ENCODE measurements at regions of chr16 and their contacts with region 1.

Region 1: DNA sequence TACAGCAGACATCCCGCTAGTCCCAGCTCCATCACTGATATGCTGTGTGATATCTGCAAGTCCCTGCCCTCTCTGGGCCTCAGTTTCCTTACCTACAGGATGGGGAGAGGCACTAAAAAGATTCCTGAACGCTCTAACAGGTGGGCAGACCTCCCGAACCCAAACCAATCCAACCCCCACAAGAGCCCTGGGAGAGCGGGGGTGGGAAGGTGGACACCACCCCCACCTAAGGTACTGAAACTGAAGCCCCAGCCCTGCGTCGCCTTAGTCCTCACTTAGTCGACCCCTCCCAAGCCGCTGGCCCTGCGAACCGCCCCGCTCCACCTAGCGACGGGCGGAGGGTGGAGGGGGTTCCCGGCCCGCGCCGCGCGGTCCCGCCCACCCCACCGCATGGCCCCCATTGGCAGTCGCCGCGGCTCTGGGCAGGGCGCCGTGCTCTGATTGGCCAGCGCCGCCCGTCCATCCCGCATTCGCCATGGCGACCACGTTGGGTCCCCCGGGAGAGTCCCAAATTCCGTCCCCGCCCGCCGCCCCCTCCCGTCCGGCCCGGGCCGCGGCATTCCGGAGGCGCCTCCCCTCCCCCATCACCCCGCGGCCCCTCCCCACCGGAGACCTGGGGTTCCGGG is 578 bp downstream of the CCDC102A start:
- DNase-seq: peak; percentile 87
- ATAC-seq: peak; percentile 70
- H3K4me3 Mint-ChIP-seq: peak overlapping the region; percentile 85
- H3K27ac Mint-ChIP-seq: peak overlapping the region; percentile 89
- H3K4me1 Mint-ChIP-seq: peaks cover 83% of the 10 kb centered on the region
- H3K27me3 Mint-ChIP-seq: no peaks in the 10 kb centered on the region
- CTCF ChIP-seq: no peak

Region 2: GRCh38 chr16:56425439-56425832 is 1110.4 kb before region 1 on chr16 and contains the start of gene AMFR:
- CTCF ChIA-PET with region 1: no interaction called
- POLR2A ChIA-PET with region 1: no interaction called
- intact Hi-C with region 1: loop called (anchors 2 kb)
- DNase-seq: peak; percentile 82
- ATAC-seq: peak; percentile 87
- H3K4me3 Mint-ChIP-seq: peak within 1 kb of the TSS; percentile 96
- H3K27ac Mint-ChIP-seq: peak within 1 kb of the TSS; percentile 95
- H3K4me1 Mint-ChIP-seq: peaks cover 44% of the 10 kb centered on the region
- H3K27me3 Mint-ChIP-seq: no peaks in the 10 kb centered on the region
- CTCF ChIP-seq: no peak
- total RNA-seq, gene AMFR: 118 and 134 TPM in 2 replicates

Region 3: DNA sequence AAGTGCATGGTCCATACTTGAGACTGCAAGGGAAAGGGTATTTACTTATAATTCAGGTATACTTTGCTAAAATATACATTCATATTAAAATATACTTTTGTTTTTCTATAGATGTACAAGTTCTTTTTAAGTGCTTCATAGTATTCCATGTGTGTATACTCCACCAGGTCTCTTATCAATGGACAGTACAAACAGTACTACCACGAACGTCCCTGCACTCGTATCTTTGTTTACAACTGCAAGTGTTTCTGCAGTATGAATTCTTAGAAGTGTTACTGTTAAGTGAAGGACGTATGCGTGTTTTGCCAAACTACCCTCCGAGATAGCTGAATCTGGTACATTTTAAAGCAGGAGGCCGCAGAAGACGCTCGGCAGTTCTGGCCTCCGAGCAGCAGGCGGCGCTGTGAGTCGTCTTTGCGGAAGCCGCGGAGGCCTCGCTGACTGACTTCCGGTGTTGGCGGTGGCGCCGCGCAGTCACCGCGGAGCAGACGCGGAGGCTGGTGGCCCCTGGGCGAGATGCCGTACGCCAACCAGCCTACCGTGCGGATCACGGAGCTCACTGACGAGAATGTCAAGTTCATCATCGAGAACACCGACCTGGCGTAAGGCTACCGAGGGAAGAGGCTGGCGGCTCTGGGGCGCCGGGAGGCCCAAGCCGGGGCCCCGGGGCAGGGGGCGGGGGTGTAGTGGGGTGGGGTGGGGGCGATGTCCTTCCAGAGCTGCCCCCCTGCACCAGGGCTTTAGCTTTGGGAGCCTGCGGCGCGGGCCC is 73.4 kb before region 1 on chr16 and contains the start of gene POLR2C:
- CTCF ChIA-PET with region 1: interaction called, 4 read pairs
- POLR2A ChIA-PET with region 1: no interaction called
- intact Hi-C with region 1: loop called (anchors 2 kb)
- DNase-seq: peak; percentile 93
- ATAC-seq: peak; percentile 97
- H3K4me3 Mint-ChIP-seq: peak within 1 kb of the TSS; percentile 100
- H3K27ac Mint-ChIP-seq: peak within 1 kb of the TSS; percentile 99
- H3K4me1 Mint-ChIP-seq: peaks cover 29% of the 10 kb centered on the region
- H3K27me3 Mint-ChIP-seq: no peaks in the 10 kb centered on the region
- CTCF ChIP-seq: peak; percentile 38
- total RNA-seq, gene POLR2C: 52.2 and 56.6 TPM in 2 replicates

Region 4: DNA sequence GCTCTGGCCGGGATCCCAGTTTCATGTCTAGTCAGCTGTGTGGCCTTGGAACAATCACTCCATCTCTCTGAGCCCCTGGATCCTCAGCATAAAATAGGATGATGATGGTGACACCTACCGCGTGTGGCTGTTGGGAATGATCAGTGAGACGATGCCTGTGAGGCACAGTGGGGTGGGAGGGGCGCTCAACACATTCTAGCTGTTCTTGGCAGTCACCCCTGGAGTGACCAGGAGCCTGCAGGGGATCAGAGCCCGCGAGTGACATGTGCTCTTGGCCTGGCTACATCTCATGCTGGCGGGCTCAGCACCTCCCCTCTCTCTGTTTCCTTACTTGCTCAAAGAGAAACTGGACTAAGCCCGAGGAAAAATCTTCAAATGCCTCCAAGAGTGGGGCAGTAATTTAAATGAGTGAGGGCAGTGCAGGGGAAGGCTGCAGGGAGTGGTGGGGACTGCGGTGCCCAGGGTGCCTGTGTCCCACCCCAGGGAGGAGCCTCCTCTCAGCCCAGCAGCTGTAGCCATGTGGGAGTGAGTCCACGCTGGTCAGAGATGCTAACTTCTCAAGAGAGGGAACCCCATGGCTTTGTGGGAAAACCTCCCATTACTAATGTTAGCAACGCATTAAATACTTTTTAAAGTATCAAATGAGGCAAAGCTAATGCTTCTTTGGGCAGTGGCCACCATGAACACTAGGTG is 26.4 kb before region 1 on chr16:
- CTCF ChIA-PET with region 1: no interaction called
- POLR2A ChIA-PET with region 1: no interaction called
- intact Hi-C with region 1: no loop called
- DNase-seq: no peak
- ATAC-seq: no peak
- H3K4me3 Mint-ChIP-seq: no peak overlapping the region
- H3K27ac Mint-ChIP-seq: no peak overlapping the region
- H3K4me1 Mint-ChIP-seq: no peaks in the 10 kb centered on the region
- H3K27me3 Mint-ChIP-seq: peaks cover 18% of the 10 kb centered on the region
- CTCF ChIP-seq: no peak

Region 5: GRCh38 chr16:57519796-57520360 is 15.9 kb before region 1 on chr16:
- CTCF ChIA-PET with region 1: interaction called, 20 read pairs
- POLR2A ChIA-PET with region 1: interaction called, 22 read pairs
- intact Hi-C with region 1: loop called (anchors 1 kb)
- DNase-seq: peak; percentile 68
- ATAC-seq: peak; percentile 80
- H3K4me3 Mint-ChIP-seq: no peak overlapping the region
- H3K27ac Mint-ChIP-seq: no peak overlapping the region
- H3K4me1 Mint-ChIP-seq: peaks cover 40% of the 10 kb centered on the region
- H3K27me3 Mint-ChIP-seq: no peaks in the 10 kb centered on the region
- CTCF ChIP-seq: peak; percentile 96

Region 6: GRCh38 chr16:57555831-57556230 is 20.0 kb after region 1 on chr16:
- CTCF ChIA-PET with region 1: no interaction called
- POLR2A ChIA-PET with region 1: interaction called, 14 read pairs
- intact Hi-C with region 1: loop called (anchors 2 kb)
- DNase-seq: no peak
- ATAC-seq: no peak
- H3K4me3 Mint-ChIP-seq: no peak overlapping the region
- H3K27ac Mint-ChIP-seq: peak overlapping the region; percentile 43
- H3K4me1 Mint-ChIP-seq: peaks cover 68% of the 10 kb centered on the region
- H3K27me3 Mint-ChIP-seq: no peaks in the 10 kb centered on the region
- CTCF ChIP-seq: no peak

Measured in activated B cell treated with CpG ODN at 0.5 μM for 24 hours (primary cell).